ENCODE measurements at regions of chr14 and their contacts with region 1.

Region 1: DNA sequence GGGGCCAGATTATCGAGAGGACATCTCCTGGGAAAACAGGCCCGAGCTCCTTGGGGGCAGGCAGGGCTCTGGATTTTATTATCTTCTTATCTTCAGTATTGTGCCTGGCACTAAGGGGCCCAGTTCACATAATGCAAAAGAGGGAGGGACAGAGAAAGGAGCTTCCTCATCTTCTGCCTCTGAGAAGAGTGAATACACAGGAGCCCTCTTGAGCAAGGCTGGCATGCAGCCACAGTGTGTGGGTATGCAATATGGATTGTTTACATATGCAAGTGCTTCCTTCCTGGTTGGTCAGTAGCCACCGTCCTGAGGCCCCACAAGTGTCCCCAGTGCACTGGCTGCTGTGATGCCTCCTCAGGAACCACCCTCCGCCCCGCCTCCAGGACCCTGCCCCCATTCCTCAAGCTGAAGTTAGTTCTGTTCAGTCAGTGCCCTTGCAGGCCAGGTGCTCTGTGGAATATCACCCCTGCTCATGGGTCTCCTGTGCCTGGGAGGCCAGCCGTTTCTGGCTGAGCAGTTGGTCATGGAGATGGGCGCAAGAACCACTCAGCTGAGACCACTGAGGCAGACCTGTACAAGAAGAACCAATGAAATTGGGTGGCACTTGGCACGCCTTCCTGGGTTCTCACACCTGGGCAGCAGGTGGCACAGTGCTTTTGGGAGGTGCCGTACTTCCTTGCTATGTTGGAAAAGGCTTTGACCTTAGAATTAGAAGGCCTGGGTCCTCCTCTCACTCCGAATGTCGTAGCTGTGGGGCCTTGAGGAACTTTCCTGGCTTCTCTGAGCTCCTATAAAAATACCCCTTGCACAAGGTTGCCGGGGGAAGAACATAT is 35.1 kb upstream of the ACTN1 start:
- DNase-seq: peak in 1 of 2 donors; percentile 44
- H3K4me3 ChIP-seq: no peak overlapping the region
- H3K27ac ChIP-seq: no peak overlapping the region
- H3K4me1 ChIP-seq: no peaks in the 10 kb centered on the region
- H3K27me3 ChIP-seq: no peaks in the 10 kb centered on the region
- CTCF ChIP-seq: no peak

Region 2: GRCh38 chr14:67846029-67846610 is 1168.0 kb before region 1 on chr14:
- intact Hi-C with region 1: loop called (anchors 10 kb)
- DNase-seq: no peak
- H3K4me3 ChIP-seq: no peak overlapping the region
- H3K27ac ChIP-seq: no peak overlapping the region
- H3K4me1 ChIP-seq: no peaks in the 10 kb centered on the region
- H3K27me3 ChIP-seq: no peaks in the 10 kb centered on the region
- CTCF ChIP-seq: no peak

Region 3: DNA sequence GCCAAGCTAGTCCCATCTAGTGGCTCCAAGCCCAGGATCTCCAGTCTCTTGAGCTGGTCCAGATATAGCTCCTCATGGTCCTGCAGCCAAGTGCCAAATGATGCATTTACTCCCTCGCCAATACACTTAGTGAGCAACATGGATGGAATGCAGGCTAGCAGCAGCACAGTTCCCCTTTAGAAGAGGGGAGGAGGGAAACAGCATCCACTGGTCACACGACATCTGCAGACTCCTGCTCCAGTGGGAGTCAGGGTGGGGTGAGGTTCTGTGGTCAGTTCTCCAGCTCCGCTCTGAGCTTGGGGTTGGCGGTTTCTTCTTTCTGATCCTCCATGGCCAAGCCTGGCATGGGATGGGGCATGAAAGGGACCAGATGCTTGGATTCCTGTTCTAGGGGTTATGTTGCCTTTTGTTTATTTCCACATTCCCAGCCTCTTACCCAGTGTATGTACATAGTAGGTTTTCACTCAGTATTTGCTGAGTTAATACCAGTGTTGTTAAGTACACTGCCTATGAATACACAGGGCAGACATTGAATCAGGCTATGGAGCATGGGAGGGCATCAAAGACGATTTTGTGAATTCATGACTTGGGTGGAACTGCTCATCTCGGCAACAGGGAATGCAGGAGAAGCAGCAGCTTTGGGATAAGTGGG is 303.1 kb after region 1 on chr14:
- intact Hi-C with region 1: no loop called
- DNase-seq: peak; percentile 78 to 89
- H3K4me3 ChIP-seq: no peak overlapping the region
- H3K27ac ChIP-seq: peak overlapping the region; percentile 66 to 71
- H3K4me1 ChIP-seq: peaks cover 0 to 25% (median 14%) of the 10 kb centered on the region in 4 donors
- H3K27me3 ChIP-seq: no peaks in the 10 kb centered on the region
- CTCF ChIP-seq: no peak

Measured in tibial artery (tissue), 4 donors.